Left cardiac atrium (tissue), 4 donors: ENCODE measurements at regions of chr19 and their contacts with region 1.

Region 1: GRCh38 chr19:6862673-6863078 is 24.7 kb upstream of the ADGRE1 start:
- DNase-seq: peak; percentile 82
- ATAC-seq: peak; percentile 89 to 95

Region 2: GRCh38 chr19:6516659-6517291 is 345.9 kb before region 1 on chr19:
- intact Hi-C with region 1: loop called in 1 of 2 experiments (anchors 2 kb)
- DNase-seq: peak; percentile 93
- ATAC-seq: peak; percentile 93 to 95

Region 3: DNA sequence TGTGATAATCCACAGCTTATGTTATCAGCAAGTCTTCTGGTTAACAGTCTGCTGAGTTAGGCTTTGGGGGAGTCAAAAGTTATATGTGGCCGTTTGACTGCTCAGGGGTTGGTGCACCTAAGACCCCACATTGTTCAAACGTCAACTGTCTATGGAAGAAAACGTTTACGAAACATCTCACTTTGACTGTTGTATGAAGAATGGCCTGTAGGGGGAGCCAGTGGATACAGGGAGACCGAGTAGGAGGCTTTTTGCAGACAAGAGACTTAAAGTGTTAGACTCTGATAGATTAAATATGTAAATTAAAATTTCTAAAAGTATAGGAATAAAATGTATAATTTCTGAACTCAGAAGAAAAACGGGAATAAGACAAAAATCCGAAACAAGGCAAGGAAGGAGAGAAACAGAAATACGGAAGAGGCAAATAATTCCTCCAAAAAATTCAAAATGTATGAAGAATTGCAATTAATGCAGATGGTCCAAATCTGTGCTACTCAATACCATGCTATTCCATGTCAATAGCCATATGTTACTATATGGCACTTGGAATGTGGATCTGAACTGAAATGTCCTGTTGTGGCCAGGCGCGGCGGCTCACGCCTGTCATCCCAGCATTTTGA is 230.6 kb before region 1 on chr19:
- intact Hi-C with region 1: loop called (anchors 5 to 10 kb)
- DNase-seq: peak; percentile 58
- ATAC-seq: peak; percentile 44 to 66

Region 4: GRCh38 chr19:6737284-6738046 is 125.2 kb before region 1 on chr19 and contains the start of gene GPR108:
- intact Hi-C with region 1: loop called in 1 of 2 experiments (anchors 5 kb)
- DNase-seq: peak; percentile 100
- ATAC-seq: peak; percentile 83 to 86
- total RNA-seq, gene GPR108: 25.7 to 35.4 TPM

Region 5: GRCh38 chr19:6822311-6822670 is 40.4 kb before region 1 on chr19:
- intact Hi-C with region 1: no loop called
- DNase-seq: no peak
- ATAC-seq: no peak

Region 6: DNA sequence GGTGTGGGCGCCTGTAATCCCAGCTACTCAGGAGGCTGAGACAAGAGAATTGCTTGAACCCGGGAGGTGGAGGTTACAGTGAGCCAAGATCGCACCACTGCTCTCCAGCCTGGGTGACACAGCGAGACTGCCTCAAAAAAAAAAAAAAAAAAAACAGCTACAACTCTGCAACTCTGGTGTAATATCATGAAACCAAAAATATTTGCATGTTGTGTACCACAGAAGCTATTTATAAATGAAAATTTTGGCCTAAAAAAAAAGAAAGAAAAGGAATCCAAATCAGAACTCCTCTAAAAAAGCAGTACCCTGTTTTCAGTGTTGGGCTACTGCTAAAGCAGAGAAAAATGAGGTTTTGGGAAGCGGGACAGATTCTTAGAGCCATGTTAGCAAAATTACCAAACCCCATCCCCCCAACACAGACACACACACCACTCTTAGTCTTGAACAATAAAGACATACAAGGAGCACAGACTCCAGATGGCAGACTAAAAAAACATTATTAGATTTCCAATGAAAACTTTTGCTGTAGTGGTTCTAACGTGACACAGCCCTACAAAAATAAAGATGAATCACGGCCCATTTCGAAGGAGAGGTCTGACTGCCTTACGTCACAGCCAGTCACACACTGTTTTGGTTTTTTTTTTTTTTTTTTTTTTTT is 380.1 kb after region 1 on chr19:
- intact Hi-C with region 1: no loop called
- DNase-seq: no peak
- ATAC-seq: peak; percentile 75 to 86